Brain microvascular endothelial cell (primary cell): ENCODE measurements at regions of chr11 and their contacts with region 1.

Region 1: GRCh38 chr11:104164028-104164520 is at the start of gene PDGFD:
- DNase-seq: peak; percentile 41
- H3K4me3 ChIP-seq: peak within 1 kb of the TSS; percentile 67
- H3K27ac ChIP-seq: no peak within 1 kb of the TSS
- H3K27me3 ChIP-seq: no peaks in the 10 kb centered on the region
- CTCF ChIP-seq: peak; percentile 66

Region 2: DNA sequence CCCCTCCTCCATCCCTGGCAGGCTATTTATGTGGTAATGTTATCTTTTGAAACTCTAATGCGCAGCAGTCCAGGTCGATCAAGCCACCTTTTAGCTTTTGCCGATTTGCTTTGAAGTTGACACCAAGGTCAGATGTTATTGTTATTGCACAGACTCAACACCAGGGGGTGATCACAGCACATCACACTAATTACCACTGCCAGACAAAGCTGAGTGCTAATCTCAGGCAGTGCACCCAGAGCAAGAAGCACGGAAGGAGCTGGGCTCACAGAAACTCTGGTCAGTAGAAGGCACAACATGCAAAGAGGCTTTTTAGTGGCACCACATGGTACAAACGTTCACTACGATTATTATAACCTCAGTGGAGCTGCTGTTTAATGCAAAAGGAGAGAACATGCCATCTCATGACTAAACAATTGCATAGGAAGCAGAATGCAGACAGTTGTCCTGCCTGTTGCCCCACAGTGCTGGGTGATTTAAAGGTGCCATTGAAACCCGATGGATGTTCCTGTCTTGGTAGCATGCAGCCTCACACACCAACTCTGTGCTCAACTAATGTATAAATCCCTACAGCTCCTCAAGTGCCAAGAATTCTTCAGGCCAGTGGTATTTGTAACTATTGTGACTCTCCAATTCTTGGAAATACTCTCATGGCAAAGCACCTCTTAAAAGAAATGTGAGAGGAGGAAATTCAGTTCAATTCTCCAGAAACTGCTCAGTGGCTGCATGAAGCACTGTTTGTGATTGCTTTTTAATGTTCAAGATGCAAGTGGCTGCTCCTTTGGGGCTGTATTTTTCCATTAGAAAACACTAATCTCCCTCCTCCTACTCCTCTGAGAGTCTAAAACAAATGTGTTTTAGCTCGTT is 481.5 kb before region 1 on chr11:
- in situ Hi-C with region 1: loop called (anchors 25 kb)
- DNase-seq: peak; percentile 75
- H3K4me3 ChIP-seq: no peak overlapping the region
- H3K27ac ChIP-seq: no peak overlapping the region
- H3K27me3 ChIP-seq: no peaks in the 10 kb centered on the region
- CTCF ChIP-seq: peak; percentile 82